Breast epithelium (tissue), 4 donors: ENCODE measurements at regions of chr11 and their contacts with region 1.

Region 1: DNA sequence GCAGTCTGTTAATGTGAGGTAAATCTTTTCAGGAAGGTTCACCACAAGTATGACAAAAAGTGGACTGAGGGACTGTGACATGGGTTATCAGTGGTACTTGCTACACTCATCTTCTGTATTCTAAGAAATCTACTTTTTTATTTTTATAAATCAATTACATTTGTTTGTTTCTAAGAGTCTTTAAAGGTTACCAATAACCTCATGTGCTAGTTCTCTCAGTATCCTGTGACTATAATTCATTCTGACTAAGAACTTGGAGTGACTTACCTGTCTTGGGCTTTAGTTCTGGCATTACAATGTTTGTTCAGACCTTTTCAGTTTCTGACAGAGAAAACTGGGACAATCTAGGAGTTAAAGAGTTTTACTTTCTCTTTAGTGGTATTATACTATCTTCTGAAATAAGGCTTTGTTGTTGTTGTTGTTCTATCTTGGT is 108.4 kb downstream of the PDE3B start:
- DNase-seq: no peak
- H3K4me3 ChIP-seq: no peak overlapping the region
- H3K27ac ChIP-seq: no peak overlapping the region
- H3K4me1 ChIP-seq: no peaks in the 10 kb centered on the region
- H3K27me3 ChIP-seq: no peaks in the 10 kb centered on the region
- CTCF ChIP-seq: no peak
- POLR2A ChIP-seq: no peak

Region 2: DNA sequence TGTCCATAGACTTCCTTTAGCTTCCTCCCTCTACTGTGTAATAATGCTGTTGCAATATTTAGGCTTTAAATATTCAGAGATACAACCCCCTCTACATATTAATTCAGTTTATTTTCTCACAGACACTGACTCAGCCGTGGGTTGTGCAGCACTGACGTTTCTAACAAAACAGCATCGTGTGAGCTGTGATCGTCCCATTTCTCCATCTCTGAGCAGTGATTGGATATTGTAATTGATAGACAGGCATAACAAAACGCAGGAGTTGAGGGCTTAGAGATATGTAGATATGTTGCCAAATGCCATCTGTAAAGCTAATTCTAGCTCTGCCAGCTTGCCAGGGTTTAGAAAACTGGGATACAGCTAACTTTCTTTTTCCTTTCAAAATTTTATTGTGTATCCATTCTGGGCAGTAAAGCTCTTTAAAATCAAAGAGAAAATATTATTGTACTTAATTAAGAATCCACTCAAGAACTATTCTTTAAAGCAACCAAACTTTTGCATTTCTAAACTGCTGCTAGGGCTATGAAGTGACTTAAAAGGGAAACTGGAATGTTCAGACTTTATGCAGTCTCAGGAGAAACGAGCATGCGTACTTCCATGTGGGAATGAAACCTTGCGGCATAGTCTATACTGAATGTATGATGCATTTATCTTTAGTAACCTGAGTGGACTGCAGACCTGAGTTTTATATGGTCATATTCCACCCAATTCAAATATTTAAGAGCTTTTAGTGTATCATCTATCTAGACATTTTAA is 1311.7 kb before region 1 on chr11:
- intact Hi-C with region 1: no loop called
- DNase-seq: no peak
- H3K4me3 ChIP-seq: peak overlapping the region in 2 of 3 donors; percentile 36 to 50
- H3K27ac ChIP-seq: peak overlapping the region in 1 of 2 donors; percentile 27
- H3K4me1 ChIP-seq: no peaks in the 10 kb centered on the region
- H3K27me3 ChIP-seq: no peaks in the 10 kb centered on the region
- CTCF ChIP-seq: no peak
- POLR2A ChIP-seq: no peak

Region 3: GRCh38 chr11:16468735-16469453 is 1716.9 kb after region 1 on chr11:
- intact Hi-C with region 1: loop called (anchors 10 kb)
- DNase-seq: no peak
- H3K4me3 ChIP-seq: no peak overlapping the region
- H3K27ac ChIP-seq: no peak overlapping the region
- H3K4me1 ChIP-seq: no peaks in the 10 kb centered on the region
- H3K27me3 ChIP-seq: no peaks in the 10 kb centered on the region
- CTCF ChIP-seq: no peak
- POLR2A ChIP-seq: no peak